Astrocyte of the cerebellum (primary cell): ENCODE measurements at regions of chr18 and their contacts with region 1.

Region 1: GRCh38 chr18:47490882-47491281 is 239.4 kb upstream of the SKOR2 start:
- DNase-seq: no peak
- H3K4me3 ChIP-seq: no peak overlapping the region
- CTCF ChIP-seq: no peak

Region 2: DNA sequence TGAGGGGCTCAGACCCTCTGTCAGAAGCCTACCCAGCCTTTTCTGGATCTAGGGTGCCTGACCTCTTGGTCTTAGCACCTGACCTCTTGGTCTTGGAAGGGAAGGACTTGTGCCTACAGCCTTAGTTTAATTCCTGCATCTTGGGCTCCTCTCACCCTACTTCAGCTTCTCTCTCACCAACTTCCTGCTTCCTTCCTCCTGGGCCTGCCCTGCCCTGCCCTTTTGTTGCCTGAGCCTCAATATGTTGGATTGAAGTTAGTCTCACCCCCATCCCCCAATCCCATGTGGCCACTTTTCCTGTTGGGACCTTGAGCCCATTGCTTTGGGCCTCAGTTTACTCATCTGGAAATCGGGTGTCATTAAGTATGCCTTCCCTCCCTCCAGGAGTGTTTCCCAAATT is 33.3 kb before region 1 on chr18:
- in situ Hi-C with region 1: loop called (anchors 5 kb)
- DNase-seq: no peak
- H3K4me3 ChIP-seq: no peak overlapping the region
- CTCF ChIP-seq: no peak